ENCODE measurements at regions of chr17 and their contacts with region 1.

Region 1: GRCh38 chr17:6666077-6666521 is 14.5 kb downstream of the C17orf100 start:
- DNase-seq: peak; percentile 71 to 80 (median 76)
- H3K4me3 ChIP-seq: no peak overlapping the region
- H3K27ac ChIP-seq: no peak overlapping the region
- H3K4me1 ChIP-seq: peaks cover 3% of the 10 kb centered on the region
- H3K27me3 ChIP-seq: no peaks in the 10 kb centered on the region
- CTCF ChIP-seq: peak; percentile 74 to 83 (median 79)
- EP300 ChIP-seq: no peak
- POLR2A ChIP-seq: no peak

Region 2: DNA sequence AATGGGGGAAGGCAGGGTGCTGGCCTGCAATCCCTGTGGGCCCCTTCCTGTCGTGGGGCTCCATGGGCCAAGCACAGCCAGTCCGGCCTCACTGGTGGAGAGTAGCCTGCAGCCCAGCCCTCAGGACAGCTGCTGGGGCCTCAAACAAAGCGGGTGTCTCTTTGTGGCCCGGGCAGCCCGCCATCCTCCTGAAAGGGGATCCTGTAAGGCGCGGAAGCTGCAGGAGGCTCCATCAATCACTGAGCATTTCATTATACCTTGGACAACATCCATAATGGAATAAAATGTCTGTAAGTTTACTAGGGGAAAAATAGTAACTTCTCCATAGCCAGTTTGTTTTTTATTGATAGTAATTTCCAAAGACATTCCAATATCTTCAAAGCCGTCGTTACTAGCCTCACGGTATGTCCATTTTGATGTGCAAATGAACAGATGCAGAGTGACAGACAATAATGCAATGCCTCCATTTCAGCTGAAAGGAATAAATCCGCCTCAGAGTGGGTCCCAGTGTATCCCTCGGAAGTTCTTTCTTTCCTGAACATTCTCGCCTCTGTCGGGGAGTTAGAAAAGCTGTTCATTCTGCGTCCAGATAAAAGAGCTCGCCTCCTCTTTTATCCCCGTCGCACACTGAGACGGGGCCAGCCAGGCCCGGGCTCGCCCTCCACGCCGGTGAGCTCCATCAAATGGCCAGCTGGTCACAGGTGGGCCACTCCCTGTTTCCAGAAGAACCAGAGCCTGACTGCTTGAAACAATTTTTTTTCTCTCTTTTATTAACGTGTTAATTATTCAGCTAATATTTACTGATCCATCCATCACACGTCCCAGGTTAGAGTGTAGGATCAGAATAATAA is 581.6 kb before region 1 on chr17:
- intact Hi-C with region 1: no loop called
- DNase-seq: no peak
- H3K4me3 ChIP-seq: no peak overlapping the region
- H3K27ac ChIP-seq: no peak overlapping the region
- H3K4me1 ChIP-seq: no peaks in the 10 kb centered on the region
- H3K27me3 ChIP-seq: no peaks in the 10 kb centered on the region
- CTCF ChIP-seq: no peak
- EP300 ChIP-seq: no peak
- POLR2A ChIP-seq: no peak

Region 3: GRCh38 chr17:6753006-6753445 is 86.9 kb after region 1 on chr17:
- intact Hi-C with region 1: loop called in 1 of 4 experiments (anchors 10 kb)
- DNase-seq: peak; percentile 62 to 81 (median 68)
- H3K4me3 ChIP-seq: no peak overlapping the region
- H3K27ac ChIP-seq: peak overlapping the region; percentile 14 to 95
- H3K4me1 ChIP-seq: peaks cover 23% of the 10 kb centered on the region
- H3K27me3 ChIP-seq: no peaks in the 10 kb centered on the region
- CTCF ChIP-seq: no peak
- EP300 ChIP-seq: no peak
- POLR2A ChIP-seq: no peak

Region 4: DNA sequence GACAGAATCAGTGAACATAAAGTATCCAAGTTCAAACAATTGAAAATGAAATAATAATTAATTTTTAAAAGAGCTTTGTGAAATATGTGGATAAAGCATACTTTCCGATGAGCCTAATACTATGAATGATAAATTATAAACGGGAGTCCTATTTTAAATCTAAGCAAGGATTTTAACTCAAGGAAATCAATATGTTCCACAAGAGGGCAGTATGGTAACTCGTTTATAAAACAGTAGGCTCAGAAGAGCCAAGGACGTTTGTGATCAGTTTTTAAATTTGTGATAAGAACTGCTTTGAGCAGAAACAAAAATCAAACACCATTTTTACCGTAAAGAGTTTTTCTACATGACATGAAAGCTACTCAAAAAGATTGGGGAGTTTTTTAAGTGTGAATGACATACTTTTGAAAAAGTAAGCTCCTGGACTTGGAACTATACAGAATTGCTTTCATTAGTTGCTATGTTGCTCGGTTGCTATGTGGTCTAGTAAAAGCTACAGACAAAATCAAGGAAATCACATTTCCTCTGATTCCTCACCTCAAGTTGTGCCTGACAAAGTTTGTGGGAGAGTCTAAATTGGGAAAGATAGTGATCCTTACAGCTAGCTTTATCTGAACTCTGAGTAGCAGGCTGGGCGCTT is 177.3 kb after region 1 on chr17:
- intact Hi-C with region 1: loop called in 3 of 4 experiments (anchors 5 to 10 kb)
- DNase-seq: no peak
- H3K4me3 ChIP-seq: no peak overlapping the region
- H3K27ac ChIP-seq: no peak overlapping the region
- H3K4me1 ChIP-seq: no peaks in the 10 kb centered on the region
- H3K27me3 ChIP-seq: no peaks in the 10 kb centered on the region
- CTCF ChIP-seq: no peak
- EP300 ChIP-seq: no peak
- POLR2A ChIP-seq: no peak

Region 5: DNA sequence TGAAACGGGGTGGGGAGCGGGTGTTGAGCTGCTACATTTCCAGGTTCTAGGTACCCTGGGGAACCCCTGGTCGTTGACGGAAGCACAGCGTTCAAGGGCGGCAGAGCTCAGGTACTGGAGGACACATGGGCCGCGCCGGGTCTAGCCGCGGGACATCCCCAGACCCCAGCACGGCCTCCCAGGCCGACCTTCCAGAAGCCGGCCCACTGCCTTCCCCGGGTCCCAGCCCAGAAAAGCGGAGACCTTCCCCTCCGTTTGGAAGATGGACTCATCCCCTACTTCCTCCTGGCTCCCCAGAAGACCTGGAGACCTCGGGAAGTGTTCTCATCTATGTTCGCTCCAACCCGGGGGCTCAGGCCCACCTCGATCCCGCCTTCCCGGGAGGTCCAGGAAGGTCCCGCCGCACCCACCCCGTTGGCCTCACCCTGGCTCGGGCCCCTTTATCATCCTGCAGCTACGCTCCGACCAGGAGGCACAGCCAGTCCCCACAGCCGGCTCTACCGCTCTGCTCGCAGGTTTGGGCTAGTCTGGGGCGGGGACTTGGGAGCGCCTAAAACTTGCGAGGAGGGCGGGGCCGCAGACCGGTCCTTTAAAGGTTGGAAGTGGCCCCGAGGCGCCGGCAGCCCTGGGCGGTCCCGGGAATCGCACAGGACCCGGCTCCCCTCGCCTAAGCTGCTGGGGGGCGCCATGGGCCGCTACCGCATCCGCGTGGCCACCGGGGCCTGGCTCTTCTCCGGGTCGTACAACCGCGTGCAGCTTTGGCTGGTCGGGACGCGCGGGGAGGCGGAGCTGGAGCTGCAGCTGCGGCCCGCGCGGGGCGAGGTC is 329.5 kb after region 1 on chr17 and contains the start of gene ALOX12:
- intact Hi-C with region 1: loop called in 2 of 4 experiments (anchors 10 kb)
- DNase-seq: peak in 3 of 5 donors; percentile 35 to 61 (median 45)
- H3K4me3 ChIP-seq: peak within 1 kb of the TSS; percentile 7
- H3K27ac ChIP-seq: no peak within 1 kb of the TSS
- H3K4me1 ChIP-seq: peaks cover 3% of the 10 kb centered on the region
- H3K27me3 ChIP-seq: no peaks in the 10 kb centered on the region
- CTCF ChIP-seq: no peak
- EP300 ChIP-seq: no peak
- POLR2A ChIP-seq: no peak
- total RNA-seq, gene ALOX12: 0.51 to 0.74 (median 0.62) TPM in 3 of 7 donors, not detected in the others

Region 6: GRCh38 chr17:7014261-7014994 is 348.3 kb after region 1 on chr17:
- intact Hi-C with region 1: loop called in 2 of 4 experiments (anchors 5 to 10 kb)
- DNase-seq: peak; percentile 98 to 99 (median 98)
- H3K4me3 ChIP-seq: peak overlapping the region; percentile 83
- H3K27ac ChIP-seq: peak overlapping the region; percentile 93 to 94
- H3K4me1 ChIP-seq: peaks cover 17% of the 10 kb centered on the region
- H3K27me3 ChIP-seq: no peaks in the 10 kb centered on the region
- CTCF ChIP-seq: peak; percentile 49 to 81 (median 81)
- EP300 ChIP-seq: no peak
- POLR2A ChIP-seq: peak; percentile 83